ENCODE measurements at regions of chr18 and their contacts with region 1.

Region 1: GRCh38 chr18:12857215-12857905 is 26.7 kb downstream of the PTPN2 start:
- DNase-seq: no peak
- ATAC-seq: no peak
- H3K4me3 ChIP-seq: no peak overlapping the region
- H3K27ac ChIP-seq: no peak overlapping the region
- H3K4me1 ChIP-seq: peaks cover 2% of the 10 kb centered on the region in 2 experiments
- H3K27me3 ChIP-seq: no peaks in the 10 kb centered on the region
- CTCF ChIP-seq: no peak
- POLR2A ChIP-seq: no peak
- RAD21 ChIP-seq: no peak

Region 2: DNA sequence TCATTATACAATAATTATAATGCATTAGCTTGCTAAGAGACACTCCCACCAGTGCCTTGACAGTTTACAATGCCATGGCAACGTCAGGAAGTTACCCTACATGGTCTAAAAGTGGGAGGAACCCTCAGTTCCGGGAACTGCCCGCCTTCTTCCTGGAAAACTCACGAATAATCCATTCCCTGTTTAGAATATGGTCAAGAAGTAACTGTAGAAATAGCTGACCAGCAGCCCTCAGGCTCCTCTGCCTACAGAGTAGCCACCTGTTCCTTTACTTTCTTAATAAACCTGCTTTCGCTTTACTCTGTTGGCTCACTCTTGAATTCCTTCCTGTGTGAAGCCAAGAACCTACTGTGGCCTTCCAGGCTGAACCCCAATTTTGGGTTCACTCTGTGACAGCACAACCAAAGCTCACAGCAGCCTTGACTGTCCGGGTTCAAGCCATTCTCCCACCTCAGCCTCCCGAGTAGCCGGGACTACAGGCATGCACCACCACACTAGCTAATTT is 46.7 kb after region 1 on chr18:
- CTCF ChIA-PET with region 1: no interaction called
- POLR2A ChIA-PET with region 1: no interaction called
- RAD21 ChIA-PET with region 1: no interaction called
- intact Hi-C with region 1: loop called (anchors 10 kb)
- DNase-seq: no peak
- ATAC-seq: no peak
- H3K4me3 ChIP-seq: no peak overlapping the region
- H3K27ac ChIP-seq: no peak overlapping the region
- H3K4me1 ChIP-seq: no peaks in the 10 kb centered on the region
- H3K27me3 ChIP-seq: no peaks in the 10 kb centered on the region
- CTCF ChIP-seq: no peak
- POLR2A ChIP-seq: no peak
- RAD21 ChIP-seq: no peak

Measured in HCT116 (cell line).